Heart left ventricle (tissue), 16 donors: ENCODE measurements at regions of chr16 and their contacts with region 1.

Region 1: GRCh38 chr16:15996432-15997109 is 47.2 kb downstream of the ABCC1 start:
- DNase-seq: peak in 2 of 5 donors; percentile 11 to 65
- ATAC-seq: peak in 3 of 4 donors; percentile 34 to 49 (median 36)
- H3K4me3 ChIP-seq: no peak overlapping the region
- H3K27ac ChIP-seq: peak overlapping the region in 4 of 12 donors; percentile 32 to 71 (median 56)
- H3K4me1 ChIP-seq: peaks cover 3 to 68% (median 47%) of the 10 kb centered on the region in 12 donors
- H3K27me3 ChIP-seq: no peaks in the 10 kb centered on the region
- CTCF ChIP-seq: no peak
- POLR2A ChIP-seq: no peak

Region 2: GRCh38 chr16:15954814-15955151 is 41.8 kb before region 1 on chr16:
- intact Hi-C with region 1: loop called in 1 of 10 experiments (anchors 5 kb)
- DNase-seq: peak in 2 of 5 donors; percentile 47 to 73
- ATAC-seq: peak in 3 of 4 donors; percentile 18 to 62 (median 38)
- H3K4me3 ChIP-seq: no peak overlapping the region
- H3K27ac ChIP-seq: peak overlapping the region in 2 of 12 donors; percentile 34 to 75
- H3K4me1 ChIP-seq: peaks cover 0 to 75% (median 22%) of the 10 kb centered on the region in 12 donors
- H3K27me3 ChIP-seq: no peaks in the 10 kb centered on the region
- CTCF ChIP-seq: no peak
- POLR2A ChIP-seq: no peak

Region 3: GRCh38 chr16:15961060-15961511 is 35.5 kb before region 1 on chr16:
- intact Hi-C with region 1: loop called in 2 of 10 experiments (anchors 5 kb)
- DNase-seq: no peak
- ATAC-seq: no peak
- H3K4me3 ChIP-seq: peak overlapping the region in 1 of 12 donors; percentile 15
- H3K27ac ChIP-seq: peak overlapping the region in 8 of 12 donors; percentile 11 to 78 (median 37)
- H3K4me1 ChIP-seq: peaks cover 0 to 59% (median 19%) of the 10 kb centered on the region in 12 donors
- H3K27me3 ChIP-seq: no peaks in the 10 kb centered on the region
- CTCF ChIP-seq: no peak
- POLR2A ChIP-seq: no peak

Region 4: GRCh38 chr16:16014329-16015144 is 18.0 kb after region 1 on chr16:
- intact Hi-C with region 1: loop called in 1 of 10 experiments (anchors 2 kb)
- DNase-seq: peak; percentile 67 to 79 (median 71)
- ATAC-seq: peak; percentile 51 to 90 (median 70)
- H3K4me3 ChIP-seq: no peak overlapping the region
- H3K27ac ChIP-seq: peak overlapping the region in 1 of 12 donors; percentile 51
- H3K4me1 ChIP-seq: peaks cover 0 to 22% (median 13%) of the 10 kb centered on the region in 12 donors
- H3K27me3 ChIP-seq: no peaks in the 10 kb centered on the region
- CTCF ChIP-seq: no peak
- POLR2A ChIP-seq: no peak